Prostate gland (tissue), 2 donors: ENCODE measurements at regions of chr2 and their contacts with region 1.

Region 1: DNA sequence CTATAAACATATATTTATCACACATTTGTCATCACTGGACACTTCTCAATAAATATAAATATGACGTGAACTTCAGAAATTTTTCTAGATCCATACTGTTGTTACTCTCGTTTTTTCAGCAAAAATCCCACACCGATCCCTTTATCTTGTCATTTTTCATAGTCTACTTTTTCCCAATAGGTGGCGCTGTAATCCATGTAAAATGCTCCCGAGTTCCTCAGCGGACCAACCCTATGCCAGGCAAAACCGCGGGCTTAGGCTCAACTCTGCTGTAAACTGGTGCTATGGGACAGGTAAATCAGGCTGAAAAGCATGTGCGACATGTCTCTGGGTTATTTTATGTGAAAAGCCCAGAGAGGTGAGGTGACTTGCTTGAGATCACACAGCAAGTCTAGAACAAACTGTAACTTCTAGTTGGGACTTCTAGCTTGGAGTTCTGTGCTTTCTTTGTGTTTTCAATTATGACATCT is 104.0 kb downstream of the COBLL1 start:
- DNase-seq: peak; percentile 76
- H3K4me3 ChIP-seq: no peak overlapping the region
- H3K27ac ChIP-seq: no peak overlapping the region
- H3K4me1 ChIP-seq: no peaks in the 10 kb centered on the region
- H3K27me3 ChIP-seq: no peaks in the 10 kb centered on the region
- CTCF ChIP-seq: peak; percentile 38 to 89 (median 78)
- POLR2A ChIP-seq: no peak

Region 2: GRCh38 chr2:163752267-163752666 is 985.4 kb before region 1 on chr2:
- intact Hi-C with region 1: no loop called
- DNase-seq: no peak
- H3K4me3 ChIP-seq: no peak overlapping the region
- H3K27ac ChIP-seq: no peak overlapping the region
- H3K4me1 ChIP-seq: no peaks in the 10 kb centered on the region
- H3K27me3 ChIP-seq: no peaks in the 10 kb centered on the region
- CTCF ChIP-seq: no peak
- POLR2A ChIP-seq: no peak

Region 3: DNA sequence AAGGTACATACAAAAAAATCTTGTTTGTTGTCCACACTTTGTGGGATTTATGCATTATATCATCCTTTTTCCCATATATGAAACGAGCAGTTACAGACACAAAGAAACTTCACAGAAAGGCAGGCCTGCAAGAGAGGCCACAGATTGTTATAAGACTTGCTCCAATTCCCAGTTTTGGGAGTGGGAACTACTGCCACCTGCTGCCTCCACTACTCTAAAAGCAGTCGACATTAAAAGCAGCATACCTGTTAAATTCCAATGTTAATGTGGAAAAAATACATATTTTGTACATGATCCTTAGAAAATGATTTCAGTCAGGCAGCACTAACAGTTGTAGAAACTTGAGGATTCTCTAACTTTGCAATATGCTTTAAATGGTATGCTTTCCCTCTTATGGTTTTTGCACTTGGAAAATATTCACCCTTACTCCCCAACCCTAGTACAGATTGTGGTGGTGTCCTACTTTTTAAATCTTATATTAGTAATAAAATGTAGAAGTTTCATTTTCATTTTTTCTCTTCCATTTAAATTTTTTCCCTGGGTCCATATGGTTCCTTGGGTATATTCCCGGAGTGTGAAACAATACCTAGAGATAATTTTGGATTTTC is 179.8 kb after region 1 on chr2:
- intact Hi-C with region 1: loop called (anchors 2 kb)
- DNase-seq: peak; percentile 51
- H3K4me3 ChIP-seq: no peak overlapping the region
- H3K27ac ChIP-seq: no peak overlapping the region
- H3K4me1 ChIP-seq: no peaks in the 10 kb centered on the region
- H3K27me3 ChIP-seq: no peaks in the 10 kb centered on the region
- CTCF ChIP-seq: peak in 3 of 4 experiments; percentile 54 to 76 (median 73)
- POLR2A ChIP-seq: no peak